Caco-2 (cell line): ENCODE measurements at regions of chr11 and their contacts with region 1.

Region 1: GRCh38 chr11:116842909-116843308 is 5.5 kb upstream of the APOA1 start:
- DNase-seq: peak; percentile 79 to 95
- H3K4me3 ChIP-seq: no peak overlapping the region
- H3K4me3 Mint-ChIP-seq: peak overlapping the region; percentile 50
- H3K27ac Mint-ChIP-seq: peak overlapping the region; percentile 93
- H3K4me1 ChIP-seq: peaks cover 61% of the 10 kb centered on the region
- H3K4me1 Mint-ChIP-seq: peaks cover 45% of the 10 kb centered on the region
- H3K27me3 ChIP-seq: no peaks in the 10 kb centered on the region
- H3K27me3 Mint-ChIP-seq: no peaks in the 10 kb centered on the region
- CTCF ChIP-seq: no peak

Region 2: DNA sequence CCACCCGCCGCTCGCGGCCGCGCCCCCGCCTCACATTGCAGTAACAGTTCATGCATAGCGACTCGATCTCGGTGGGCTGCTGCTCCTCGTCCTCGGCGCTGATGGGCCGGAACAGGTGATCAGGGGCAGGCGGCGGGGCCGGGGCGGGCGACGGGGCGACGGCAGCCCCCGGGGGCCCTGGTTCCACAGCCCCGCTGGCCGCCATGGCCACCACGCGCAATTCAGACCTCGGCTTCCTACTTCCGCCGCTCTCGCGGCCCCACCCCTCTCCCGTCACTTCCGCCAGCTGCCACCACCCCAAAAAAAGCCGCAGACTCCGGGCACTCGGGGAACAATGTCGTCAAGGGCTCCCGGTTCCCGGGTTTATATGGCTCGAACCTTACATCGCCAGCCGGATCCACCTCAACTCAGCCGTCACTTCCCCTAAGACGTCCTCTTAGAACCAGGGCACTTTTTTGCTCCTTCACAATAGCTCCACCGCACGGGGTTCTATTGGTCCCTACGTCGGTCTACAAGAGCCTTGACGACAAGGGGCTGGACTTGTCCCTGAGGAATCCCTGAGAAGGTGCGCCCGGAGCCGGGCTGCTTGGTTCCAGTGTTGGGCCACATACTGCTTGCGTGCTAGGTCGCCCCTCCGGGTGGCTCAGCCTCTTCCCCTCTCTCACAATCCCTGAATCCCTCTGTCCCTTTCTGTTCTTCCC is 55.0 kb before region 1 on chr11 and contains the start of gene ZPR1:
- CTCF ChIA-PET with region 1: interaction called, 50 read pairs
- POLR2A ChIA-PET with region 1: interaction called, 24 read pairs
- intact Hi-C with region 1: no loop called
- DNase-seq: peak; percentile 84 to 90
- H3K4me3 ChIP-seq: peak within 1 kb of the TSS; percentile 80
- H3K4me3 Mint-ChIP-seq: peak within 1 kb of the TSS; percentile 80
- H3K27ac Mint-ChIP-seq: peak within 1 kb of the TSS; percentile 94
- H3K4me1 ChIP-seq: peaks cover 46% of the 10 kb centered on the region
- H3K4me1 Mint-ChIP-seq: peaks cover 42% of the 10 kb centered on the region
- H3K27me3 ChIP-seq: no peaks in the 10 kb centered on the region
- H3K27me3 Mint-ChIP-seq: no peaks in the 10 kb centered on the region
- CTCF ChIP-seq: no peak
- total RNA-seq, gene ZPR1: 168 and 194 TPM in 2 replicates

Region 3: GRCh38 chr11:116879800-116880625 is 37.1 kb after region 1 on chr11:
- CTCF ChIA-PET with region 1: interaction called, 4 read pairs
- POLR2A ChIA-PET with region 1: interaction called, 8 read pairs
- intact Hi-C with region 1: loop called (anchors 2 kb)
- DNase-seq: peak in 1 of 2 experiments; percentile 64
- H3K4me3 ChIP-seq: no peak overlapping the region
- H3K4me3 Mint-ChIP-seq: no peak overlapping the region
- H3K27ac Mint-ChIP-seq: no peak overlapping the region
- H3K4me1 ChIP-seq: peaks cover 23% of the 10 kb centered on the region
- H3K4me1 Mint-ChIP-seq: peaks cover 40% of the 10 kb centered on the region
- H3K27me3 ChIP-seq: no peaks in the 10 kb centered on the region
- H3K27me3 Mint-ChIP-seq: no peaks in the 10 kb centered on the region
- CTCF ChIP-seq: peak; percentile 71 to 96

Region 4: GRCh38 chr11:116960930-116961329 is 118.0 kb after region 1 on chr11:
- CTCF ChIA-PET with region 1: no interaction called
- POLR2A ChIA-PET with region 1: no interaction called
- intact Hi-C with region 1: no loop called
- DNase-seq: no peak
- H3K4me3 ChIP-seq: no peak overlapping the region
- H3K4me3 Mint-ChIP-seq: no peak overlapping the region
- H3K27ac Mint-ChIP-seq: no peak overlapping the region
- H3K4me1 ChIP-seq: peaks cover 11% of the 10 kb centered on the region; the same call in 1 of the 2 replicates
- H3K4me1 Mint-ChIP-seq: peaks cover 23% of the 10 kb centered on the region
- H3K27me3 ChIP-seq: no peaks in the 10 kb centered on the region
- H3K27me3 Mint-ChIP-seq: no peaks in the 10 kb centered on the region
- CTCF ChIP-seq: no peak

Region 5: DNA sequence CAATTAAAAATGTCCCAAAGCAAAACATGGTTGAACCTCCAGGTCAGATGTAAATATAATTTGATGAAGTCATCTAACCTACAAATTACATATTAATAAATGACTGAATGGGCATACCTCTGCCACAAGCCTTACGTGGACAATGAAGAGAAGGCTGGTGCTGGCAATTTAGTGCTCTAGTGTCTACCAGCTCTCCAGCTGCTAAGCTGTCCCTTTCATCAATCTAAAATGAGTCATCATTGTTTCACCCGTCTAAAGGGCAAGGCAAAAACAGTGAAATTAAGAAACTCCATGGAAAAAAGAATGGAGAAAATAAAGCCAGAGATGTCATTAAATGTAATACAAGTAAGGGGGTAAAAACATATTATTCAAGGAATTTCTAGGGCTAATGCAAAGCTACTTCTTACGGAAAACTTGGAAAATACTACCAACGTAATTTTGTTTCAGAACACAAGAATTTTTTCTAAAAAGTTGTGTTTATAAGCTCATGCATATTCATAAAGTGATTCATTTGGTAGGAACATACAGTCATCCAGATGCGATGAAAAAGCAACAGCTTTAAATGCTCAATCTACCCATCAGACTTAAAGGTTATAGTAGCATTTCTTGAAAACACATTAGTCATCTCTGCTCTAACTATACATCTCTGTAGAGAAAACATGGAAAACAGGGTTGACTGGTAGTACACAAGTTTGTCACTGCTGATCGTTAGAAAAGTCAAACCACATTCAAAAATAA is 183.9 kb after region 1 on chr11:
- CTCF ChIA-PET with region 1: no interaction called
- POLR2A ChIA-PET with region 1: no interaction called
- intact Hi-C with region 1: no loop called
- DNase-seq: no peak
- H3K4me3 ChIP-seq: no peak overlapping the region
- H3K4me3 Mint-ChIP-seq: no peak overlapping the region
- H3K27ac Mint-ChIP-seq: no peak overlapping the region
- H3K4me1 ChIP-seq: peaks cover 44% of the 10 kb centered on the region
- H3K4me1 Mint-ChIP-seq: peaks cover 33% of the 10 kb centered on the region
- H3K27me3 ChIP-seq: no peaks in the 10 kb centered on the region
- H3K27me3 Mint-ChIP-seq: no peaks in the 10 kb centered on the region
- CTCF ChIP-seq: no peak